ENCODE measurements at regions of chr11 and their contacts with region 1.

Region 1: GRCh38 chr11:13238879-13239514 is 38.6 kb upstream of the BMAL1 start:
- DNase-seq: no peak
- H3K4me3 ChIP-seq: no peak overlapping the region
- H3K27ac ChIP-seq: no peak overlapping the region
- H3K4me1 ChIP-seq: no peaks in the 10 kb centered on the region
- H3K27me3 ChIP-seq: no peaks in the 10 kb centered on the region
- CTCF ChIP-seq: peak; percentile 83

Region 2: GRCh38 chr11:13343931-13344717 is 105.1 kb after region 1 on chr11:
- CTCF ChIA-PET with region 1: no interaction called
- POLR2A ChIA-PET with region 1: no interaction called
- intact Hi-C with region 1: loop called (anchors 1 kb)
- DNase-seq: peak; percentile 49 to 59
- H3K4me3 ChIP-seq: no peak overlapping the region
- H3K27ac ChIP-seq: no peak overlapping the region
- H3K4me1 ChIP-seq: peaks cover under 1% of the 10 kb centered on the region; the same call in 1 of the 2 replicates
- H3K27me3 ChIP-seq: no peaks in the 10 kb centered on the region
- CTCF ChIP-seq: peak; percentile 82

Region 3: GRCh38 chr11:13354335-13354734 is 115.3 kb after region 1 on chr11:
- CTCF ChIA-PET with region 1: no interaction called
- POLR2A ChIA-PET with region 1: no interaction called
- intact Hi-C with region 1: no loop called
- DNase-seq: no peak
- H3K4me3 ChIP-seq: no peak overlapping the region
- H3K27ac ChIP-seq: no peak overlapping the region
- H3K4me1 ChIP-seq: no peaks in the 10 kb centered on the region
- H3K27me3 ChIP-seq: no peaks in the 10 kb centered on the region
- CTCF ChIP-seq: peak; percentile 35; the same call in 1 of the 2 replicates